MCF 10A (cell line): ENCODE measurements at regions of chr1 and their contacts with region 1.

Region 1: GRCh38 chr1:58816072-58816746 is 32.4 kb upstream of the JUN start:
- DNase-seq: peak; percentile 88
- H3K4me3 Mint-ChIP-seq: peak overlapping the region; percentile 78
- H3K27ac Mint-ChIP-seq: peak overlapping the region; percentile 91
- H3K4me1 Mint-ChIP-seq: peaks cover 33% of the 10 kb centered on the region
- H3K27me3 Mint-ChIP-seq: no peaks in the 10 kb centered on the region
- CTCF ChIP-seq: no peak

Region 2: GRCh38 chr1:58950897-58951296 is 134.7 kb after region 1 on chr1:
- CTCF ChIA-PET with region 1: no interaction called
- POLR2A ChIA-PET with region 1: no interaction called
- intact Hi-C with region 1: no loop called
- DNase-seq: no peak
- H3K4me3 Mint-ChIP-seq: no peak overlapping the region
- H3K27ac Mint-ChIP-seq: no peak overlapping the region
- H3K4me1 Mint-ChIP-seq: peaks cover 6% of the 10 kb centered on the region
- H3K27me3 Mint-ChIP-seq: no peaks in the 10 kb centered on the region
- CTCF ChIP-seq: no peak

Region 3: DNA sequence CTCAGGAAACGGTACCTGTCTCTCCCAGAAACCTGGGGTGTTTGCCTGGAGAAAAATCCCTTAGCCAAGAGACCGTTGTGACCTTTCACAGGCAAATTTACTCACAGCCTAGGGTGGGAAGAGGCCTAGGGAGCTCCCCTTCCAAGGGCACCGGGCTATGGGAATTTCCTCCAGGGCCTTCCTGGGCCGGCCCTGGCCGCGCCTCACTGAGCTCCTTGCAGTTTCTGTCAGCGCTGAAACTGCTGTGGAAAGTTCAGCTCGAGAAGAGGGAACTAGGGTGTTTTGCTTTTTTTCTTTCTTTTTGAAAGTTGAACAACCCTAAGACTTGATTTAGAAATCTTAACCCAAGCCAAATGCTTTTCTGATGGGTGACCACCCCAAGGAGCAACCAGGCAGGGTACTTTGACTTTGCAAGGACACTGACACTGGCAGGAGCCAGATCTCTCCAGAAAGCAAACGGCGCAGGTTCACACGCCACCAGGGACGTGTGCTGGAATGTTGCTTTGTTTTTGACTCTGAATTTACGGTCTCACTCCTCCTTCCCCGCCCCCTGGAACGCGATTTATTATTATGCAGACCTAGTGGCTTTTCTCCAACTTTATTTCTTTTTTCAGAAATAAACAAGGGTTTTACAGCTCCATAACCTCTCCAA is 197.2 kb after region 1 on chr1:
- CTCF ChIA-PET with region 1: no interaction called
- POLR2A ChIA-PET with region 1: interaction called, 3 read pairs
- intact Hi-C with region 1: loop called (anchors 10 kb)
- DNase-seq: peak; percentile 44
- H3K4me3 Mint-ChIP-seq: no peak overlapping the region
- H3K27ac Mint-ChIP-seq: peak overlapping the region; percentile 50
- H3K4me1 Mint-ChIP-seq: peaks cover 23% of the 10 kb centered on the region
- H3K27me3 Mint-ChIP-seq: no peaks in the 10 kb centered on the region
- CTCF ChIP-seq: no peak